Activated CD4-positive, alpha-beta T cell treated with anti-CD3 and anti-CD28 coated beads, Interleukin-2, amount 10 ng/mL, durations not matched to agents 24 days and 14 days (primary cell): ENCODE measurements at regions of chr16 and their contacts with region 1.

Region 1: GRCh38 chr16:11345040-11345862 is at the start of gene RMI2:
- DNase-seq: peak; percentile 99
- H3K4me3 Mint-ChIP-seq: peak within 1 kb of the TSS; percentile 90
- H3K27ac Mint-ChIP-seq: peak within 1 kb of the TSS; percentile 89
- H3K4me1 Mint-ChIP-seq: peaks cover 48% of the 10 kb centered on the region
- H3K27me3 Mint-ChIP-seq: no peaks in the 10 kb centered on the region
- total RNA-seq, gene RMI2: 63.8 and 65.6 TPM in 2 replicates

Region 2: GRCh38 chr16:10944249-10945064 is 400.8 kb before region 1 on chr16 and contains the start of gene CLEC16A:
- intact Hi-C with region 1: loop called (anchors 1 kb)
- DNase-seq: peak; percentile 99
- H3K4me3 Mint-ChIP-seq: peak within 1 kb of the TSS; percentile 84
- H3K27ac Mint-ChIP-seq: peak within 1 kb of the TSS; percentile 79
- H3K4me1 Mint-ChIP-seq: peaks cover 56% of the 10 kb centered on the region
- H3K27me3 Mint-ChIP-seq: no peaks in the 10 kb centered on the region
- total RNA-seq, gene CLEC16A: 35.9 and 36.2 TPM in 2 replicates

Region 3: DNA sequence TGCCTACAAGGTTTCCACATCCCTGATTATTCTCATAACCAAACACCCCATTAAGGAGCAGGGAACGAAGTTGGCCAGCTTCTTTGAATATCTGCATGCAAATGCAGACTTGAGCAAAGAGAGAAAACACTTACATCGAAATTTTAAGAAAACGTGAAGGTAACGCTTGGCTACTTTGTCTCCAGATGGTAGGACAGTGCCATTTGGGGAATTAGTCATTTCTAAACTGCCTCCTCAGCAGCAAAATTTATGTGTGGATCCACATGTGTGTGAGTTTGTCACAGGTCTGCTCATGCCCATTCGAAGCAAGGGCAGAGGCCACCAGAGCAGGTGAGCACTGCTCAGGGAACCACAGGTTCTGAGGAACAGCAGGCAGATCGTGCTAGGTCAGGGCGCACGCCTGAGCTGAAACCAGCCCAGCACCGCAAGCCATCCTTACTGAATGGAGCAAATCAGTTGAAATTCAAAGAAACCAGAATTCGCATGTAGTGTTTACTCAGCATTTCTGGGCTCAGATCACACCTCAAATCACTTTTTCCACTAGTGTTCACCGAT is 169.4 kb before region 1 on chr16:
- intact Hi-C with region 1: no loop called
- DNase-seq: peak; percentile 71
- H3K4me3 Mint-ChIP-seq: peak overlapping the region; percentile 39
- H3K27ac Mint-ChIP-seq: peak overlapping the region; percentile 85
- H3K4me1 Mint-ChIP-seq: peaks cover 48% of the 10 kb centered on the region
- H3K27me3 Mint-ChIP-seq: no peaks in the 10 kb centered on the region

Region 4: DNA sequence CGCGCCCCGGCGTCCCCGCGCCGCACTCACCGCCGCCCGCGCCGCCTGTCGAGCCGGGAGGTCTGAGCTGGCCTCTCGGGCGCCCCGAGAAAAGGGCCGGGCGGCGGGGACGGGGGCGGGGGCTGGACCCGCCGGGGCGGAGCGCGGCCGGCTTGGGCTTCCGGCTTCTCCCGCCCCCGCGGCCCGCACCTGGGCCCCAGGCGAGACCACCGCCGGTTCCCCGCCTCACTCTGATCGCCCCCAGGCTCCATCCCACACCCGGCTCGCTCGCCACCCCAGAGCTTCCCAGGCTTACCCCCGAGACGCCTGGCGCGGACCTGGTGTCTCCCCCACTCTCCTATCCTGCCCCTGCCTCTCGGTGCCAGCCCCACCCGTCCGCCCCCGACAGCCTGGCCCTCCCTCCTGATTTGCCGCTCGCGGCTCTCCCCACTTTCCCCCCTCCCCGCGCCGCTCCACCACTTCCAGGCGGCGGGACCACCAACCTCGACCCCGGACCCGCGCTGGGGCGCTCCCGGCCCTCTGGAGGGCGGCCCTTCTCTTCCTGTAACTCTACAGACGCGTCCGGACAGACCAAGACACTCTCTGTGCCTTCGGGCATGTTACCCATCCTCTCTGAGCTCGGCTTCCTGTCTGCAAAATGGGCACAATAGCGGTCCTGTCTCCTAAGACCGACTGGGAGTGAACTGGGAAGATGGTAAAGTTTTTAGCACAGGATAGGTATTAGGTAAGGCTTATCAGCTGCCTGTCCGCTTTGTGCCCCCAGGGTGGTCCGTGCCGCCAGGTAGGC is 241.8 kb after region 1 on chr16 and contains the start of gene LITAF:
- intact Hi-C with region 1: no loop called
- DNase-seq: peak; percentile 87
- H3K4me3 Mint-ChIP-seq: peak within 1 kb of the TSS; percentile 90
- H3K27ac Mint-ChIP-seq: peak within 1 kb of the TSS; percentile 89
- H3K4me1 Mint-ChIP-seq: peaks cover 38% of the 10 kb centered on the region
- H3K27me3 Mint-ChIP-seq: peaks cover 3% of the 10 kb centered on the region
- total RNA-seq, gene LITAF: 163 and 170 TPM in 2 replicates